Activated CD4-positive, alpha-beta T cell treated with anti-CD3 and anti-CD28 coated beads for 36 hours (primary cell): ENCODE measurements at regions of chr6 and their contacts with region 1.

Region 1: GRCh38 chr6:85678602-85679444 is 36.1 kb upstream of the SYNCRIP start:
- DNase-seq: peak; percentile 98
- ATAC-seq: peak; percentile 87
- H3K4me3 Mint-ChIP-seq: peak overlapping the region; percentile 90
- H3K27ac Mint-ChIP-seq: peak overlapping the region; percentile 93
- H3K4me1 Mint-ChIP-seq: peaks cover 33% of the 10 kb centered on the region
- H3K27me3 Mint-ChIP-seq: no peaks in the 10 kb centered on the region

Region 2: DNA sequence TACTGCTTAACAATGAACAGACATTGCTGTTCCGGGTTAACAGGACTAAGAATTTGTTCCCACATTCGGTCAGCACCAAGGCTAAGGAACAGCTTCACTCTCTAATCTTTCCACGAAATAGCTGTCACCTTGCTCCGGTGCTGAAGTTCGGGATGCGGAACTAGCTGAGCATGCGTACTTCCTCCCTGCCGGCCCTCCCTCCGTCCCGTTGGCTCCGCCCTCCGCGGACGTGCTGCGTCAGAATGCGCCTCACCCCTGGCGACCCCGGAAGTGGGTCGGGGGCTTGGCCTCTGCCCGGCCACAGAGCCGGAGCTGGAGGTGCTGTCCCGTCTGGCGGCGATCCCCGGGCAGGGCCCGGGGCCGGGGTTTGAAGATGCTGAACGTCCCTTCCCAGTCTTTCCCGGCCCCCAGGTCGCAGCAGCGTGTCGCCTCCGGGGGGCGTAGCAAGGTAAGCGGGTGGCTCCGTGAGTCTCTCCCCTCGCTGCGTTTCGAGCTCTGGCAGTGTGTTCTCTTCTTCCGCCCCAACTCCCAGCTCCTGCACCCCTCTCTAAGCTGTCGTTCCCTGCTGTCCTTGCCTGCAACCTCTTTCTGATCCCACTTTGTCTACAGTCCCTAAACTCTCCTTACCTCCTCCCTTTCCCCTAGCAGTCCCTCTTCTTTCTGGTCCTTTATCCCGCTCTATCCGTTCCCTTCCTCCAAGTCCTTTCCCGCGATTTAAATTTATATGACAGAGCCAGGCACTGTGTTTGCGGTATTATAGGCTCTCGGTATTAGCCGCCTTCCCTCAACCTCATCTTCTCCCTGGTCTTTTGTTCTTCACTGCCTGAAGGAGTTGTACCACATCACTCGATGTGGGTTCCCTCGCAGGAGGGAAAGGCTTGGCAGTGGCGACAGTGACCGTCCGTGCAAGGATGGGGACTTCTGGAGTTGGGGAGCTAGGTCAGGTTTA is 1819.1 kb before region 1 on chr6 and contains the start of gene CYB5R4:
- CTCF ChIA-PET with region 1: no interaction called
- POLR2A ChIA-PET with region 1: no interaction called
- intact Hi-C with region 1: loop called in 1 of 2 experiments (anchors 10 kb)
- DNase-seq: peak; percentile 96
- ATAC-seq: peak; percentile 98
- H3K4me3 Mint-ChIP-seq: peak within 1 kb of the TSS; percentile 97
- H3K27ac Mint-ChIP-seq: peak within 1 kb of the TSS; percentile 92
- H3K4me1 Mint-ChIP-seq: peaks cover 27% of the 10 kb centered on the region
- H3K27me3 Mint-ChIP-seq: peaks cover 11% of the 10 kb centered on the region
- total RNA-seq, gene CYB5R4: 21.9 to 28.2 TPM

Region 3: GRCh38 chr6:84953111-84953755 is 725.6 kb before region 1 on chr6:
- CTCF ChIA-PET with region 1: no interaction called
- POLR2A ChIA-PET with region 1: no interaction called
- intact Hi-C with region 1: no loop called
- DNase-seq: no peak
- ATAC-seq: no peak
- H3K4me3 Mint-ChIP-seq: no peak overlapping the region
- H3K27ac Mint-ChIP-seq: no peak overlapping the region
- H3K4me1 Mint-ChIP-seq: no peaks in the 10 kb centered on the region
- H3K27me3 Mint-ChIP-seq: no peaks in the 10 kb centered on the region

Region 4: DNA sequence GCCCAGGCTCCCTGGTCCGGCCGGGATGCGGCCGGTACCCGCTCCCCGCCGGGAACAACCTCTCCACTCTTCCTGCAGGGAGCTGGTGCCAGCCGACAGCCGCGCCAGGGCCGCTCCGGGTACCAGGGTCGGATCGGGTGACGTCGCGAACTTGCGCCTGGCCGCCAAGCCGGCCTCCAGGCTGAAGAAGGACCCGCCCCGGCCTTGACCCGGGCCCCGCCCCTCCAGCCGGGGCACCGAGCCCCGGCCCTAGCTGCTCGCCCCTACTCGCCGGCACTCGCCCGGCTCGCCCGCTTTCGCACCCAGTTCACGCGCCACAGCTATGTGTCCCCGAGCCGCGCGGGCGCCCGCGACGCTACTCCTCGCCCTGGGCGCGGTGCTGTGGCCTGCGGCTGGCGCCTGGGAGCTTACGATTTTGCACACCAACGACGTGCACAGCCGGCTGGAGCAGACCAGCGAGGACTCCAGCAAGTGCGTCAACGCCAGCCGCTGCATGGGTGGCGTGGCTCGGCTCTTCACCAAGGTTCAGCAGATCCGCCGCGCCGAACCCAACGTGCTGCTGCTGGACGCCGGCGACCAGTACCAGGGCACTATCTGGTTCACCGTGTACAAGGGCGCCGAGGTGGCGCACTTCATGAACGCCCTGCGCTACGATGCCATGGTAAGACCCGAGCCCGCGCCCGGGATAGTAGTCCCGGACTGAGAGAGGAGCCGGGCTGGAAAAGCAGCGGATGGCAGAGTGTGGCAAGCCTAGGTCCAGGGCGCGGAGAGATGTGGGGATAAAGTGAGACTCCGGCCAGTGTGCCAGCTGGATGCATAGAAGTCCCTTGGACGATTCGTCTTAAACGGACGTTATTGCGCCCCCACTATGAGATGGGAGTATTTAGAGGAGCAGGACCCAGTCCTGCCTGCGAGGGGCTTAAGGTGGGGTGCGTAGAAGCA is 228.7 kb before region 1 on chr6 and contains the start of gene NT5E:
- CTCF ChIA-PET with region 1: no interaction called
- POLR2A ChIA-PET with region 1: no interaction called
- intact Hi-C with region 1: loop called in 1 of 2 experiments (anchors 5 kb)
- DNase-seq: peak; percentile 74
- ATAC-seq: peak; percentile 72
- H3K4me3 Mint-ChIP-seq: peak within 1 kb of the TSS; percentile 81
- H3K27ac Mint-ChIP-seq: peak within 1 kb of the TSS; percentile 87
- H3K4me1 Mint-ChIP-seq: peaks cover 53% of the 10 kb centered on the region
- H3K27me3 Mint-ChIP-seq: peaks cover 49% of the 10 kb centered on the region
- total RNA-seq, gene NT5E: 3.8 to 4.9 TPM

Region 5: GRCh38 chr6:85580882-85581267 is 97.9 kb before region 1 on chr6:
- CTCF ChIA-PET with region 1: no interaction called
- POLR2A ChIA-PET with region 1: no interaction called
- intact Hi-C with region 1: no loop called
- DNase-seq: peak; percentile 18
- ATAC-seq: peak; percentile 42
- H3K4me3 Mint-ChIP-seq: no peak overlapping the region
- H3K27ac Mint-ChIP-seq: no peak overlapping the region
- H3K4me1 Mint-ChIP-seq: peaks cover 18% of the 10 kb centered on the region
- H3K27me3 Mint-ChIP-seq: no peaks in the 10 kb centered on the region

Region 6: DNA sequence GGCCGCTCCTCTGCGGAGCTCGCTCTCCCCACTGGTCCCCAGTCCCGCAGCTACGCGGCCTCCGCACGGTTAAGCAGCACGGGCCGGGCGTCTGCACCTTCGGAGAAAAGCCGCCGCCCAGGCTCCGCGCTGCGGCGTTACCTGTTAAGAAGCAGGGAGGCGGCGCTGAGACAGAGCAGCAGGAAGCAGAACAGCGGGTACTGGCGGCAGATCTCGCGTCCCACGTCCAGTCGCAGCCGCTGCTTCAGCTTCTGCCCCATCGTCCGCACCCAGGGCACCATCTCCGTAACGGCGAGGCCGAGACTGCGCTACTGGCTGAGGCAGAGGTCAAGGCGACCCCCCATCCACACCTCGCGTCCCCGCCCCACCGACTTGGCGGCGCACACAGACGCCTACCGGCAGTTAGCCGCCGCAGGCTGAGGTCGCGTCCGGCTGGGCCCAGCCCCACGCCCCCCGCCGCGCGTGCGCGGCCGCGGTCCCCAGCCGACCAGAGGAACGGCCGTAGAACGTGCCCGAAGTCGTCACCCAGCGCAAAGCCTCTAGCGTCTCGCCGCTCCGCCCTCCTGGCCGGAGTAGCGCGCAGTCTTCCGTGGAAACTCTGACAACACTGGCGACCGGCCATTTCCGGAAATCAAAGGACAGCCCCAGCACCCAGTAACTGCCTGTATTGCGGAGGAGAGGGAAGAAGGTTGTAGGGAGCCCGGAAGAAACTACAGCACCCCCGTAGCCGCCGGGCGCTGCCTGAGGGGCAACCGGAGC is 85.2 kb before region 1 on chr6 and contains the start of gene SNX14:
- CTCF ChIA-PET with region 1: interaction called, 6 read pairs
- POLR2A ChIA-PET with region 1: interaction called, 18 read pairs
- intact Hi-C with region 1: loop called (anchors 1 kb)
- DNase-seq: peak; percentile 87
- ATAC-seq: peak; percentile 81
- H3K4me3 Mint-ChIP-seq: peak within 1 kb of the TSS; percentile 83
- H3K27ac Mint-ChIP-seq: peak within 1 kb of the TSS; percentile 90
- H3K4me1 Mint-ChIP-seq: peaks cover 28% of the 10 kb centered on the region
- H3K27me3 Mint-ChIP-seq: no peaks in the 10 kb centered on the region
- total RNA-seq, gene SNX14: 38.4 to 54.7 TPM

Region 7: DNA sequence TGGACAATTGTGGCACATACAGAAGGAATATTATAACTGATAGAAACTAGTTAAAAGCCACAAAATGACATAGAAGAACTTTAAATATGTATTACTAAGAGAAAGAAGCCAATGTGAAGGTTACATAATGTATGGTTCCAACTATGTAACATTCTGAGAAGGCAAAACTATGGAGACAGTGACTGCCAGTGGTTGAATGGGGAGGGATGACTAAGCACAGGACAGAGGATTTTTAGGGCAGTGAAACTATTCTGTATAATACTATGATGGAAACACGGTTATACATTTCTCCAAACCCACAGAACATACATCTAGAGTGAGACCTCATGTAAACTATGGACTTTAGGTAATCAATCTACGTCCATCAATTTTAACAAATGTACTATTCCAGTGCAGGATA is 58.5 kb before region 1 on chr6:
- CTCF ChIA-PET with region 1: no interaction called
- POLR2A ChIA-PET with region 1: interaction called, 3 read pairs
- intact Hi-C with region 1: loop called in 1 of 2 experiments (anchors 10 kb)
- DNase-seq: no peak
- ATAC-seq: peak; percentile 49
- H3K4me3 Mint-ChIP-seq: no peak overlapping the region
- H3K27ac Mint-ChIP-seq: no peak overlapping the region
- H3K4me1 Mint-ChIP-seq: peaks cover 33% of the 10 kb centered on the region
- H3K27me3 Mint-ChIP-seq: no peaks in the 10 kb centered on the region

Region 8: GRCh38 chr6:85756982-85757381 is 78.2 kb after region 1 on chr6:
- CTCF ChIA-PET with region 1: no interaction called
- POLR2A ChIA-PET with region 1: no interaction called
- intact Hi-C with region 1: no loop called
- DNase-seq: no peak
- ATAC-seq: no peak
- H3K4me3 Mint-ChIP-seq: no peak overlapping the region
- H3K27ac Mint-ChIP-seq: no peak overlapping the region
- H3K4me1 Mint-ChIP-seq: no peaks in the 10 kb centered on the region
- H3K27me3 Mint-ChIP-seq: peaks cover 2% of the 10 kb centered on the region